Activated CD4-positive, alpha-beta T cell treated with anti-CD3 and anti-CD28 coated beads for 36 hours (primary cell): ENCODE measurements at regions of chr12 and their contacts with region 1.

Region 1: DNA sequence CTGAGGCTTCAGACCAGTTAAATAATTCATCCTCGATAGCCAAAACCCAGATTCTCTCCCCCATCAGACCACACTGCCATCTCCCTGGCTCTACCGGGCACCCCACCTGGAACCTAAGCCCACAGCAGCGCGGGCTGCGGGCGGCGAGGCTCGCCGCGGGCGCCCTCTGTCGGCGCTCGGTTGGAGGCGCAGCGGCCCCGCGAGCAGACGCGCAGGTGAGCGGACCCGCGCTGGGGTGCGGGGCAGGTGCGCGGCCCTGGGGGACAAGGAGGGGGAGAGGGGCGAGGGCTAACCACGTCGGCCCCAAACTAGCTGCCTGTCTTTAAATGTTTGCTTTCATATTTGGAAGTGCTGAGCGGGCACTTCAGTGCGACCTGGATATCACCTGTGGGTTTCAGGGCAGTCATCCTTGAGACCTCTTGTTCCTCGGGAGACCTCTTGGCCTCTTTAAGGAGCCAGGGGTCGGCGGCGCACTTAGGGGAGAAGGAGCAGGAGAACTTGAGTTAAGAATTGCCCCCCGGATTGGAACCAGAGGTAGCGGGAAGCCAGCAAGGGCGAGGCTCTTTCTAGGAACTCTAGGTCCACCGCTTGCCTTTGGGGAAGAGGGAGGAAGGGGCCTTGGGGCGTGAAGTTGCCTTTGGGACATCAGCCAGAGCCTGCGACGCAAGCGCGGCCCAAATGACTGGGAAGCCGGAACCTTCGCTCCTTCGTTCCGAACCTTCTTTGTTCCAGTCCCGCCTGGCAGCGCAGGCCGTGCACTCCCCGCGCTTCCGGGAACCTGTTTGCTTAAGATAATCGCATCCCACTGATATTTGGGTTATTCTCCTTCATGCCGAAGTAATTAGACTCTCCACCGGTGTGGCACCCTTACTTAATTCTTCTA is 78.7 kb downstream of the NEDD1 start:
- DNase-seq: peak; percentile 63
- ATAC-seq: peak; percentile 94
- H3K4me3 Mint-ChIP-seq: peak overlapping the region; percentile 52
- H3K27ac Mint-ChIP-seq: no peak overlapping the region
- H3K4me1 Mint-ChIP-seq: peaks cover 2% of the 10 kb centered on the region
- H3K27me3 Mint-ChIP-seq: peaks cover 16% of the 10 kb centered on the region

Region 2: GRCh38 chr12:96995861-96996260 is 10.1 kb after region 1 on chr12:
- CTCF ChIA-PET with region 1: interaction called, 12 read pairs
- POLR2A ChIA-PET with region 1: no interaction called
- intact Hi-C with region 1: no loop called
- DNase-seq: no peak
- ATAC-seq: no peak
- H3K4me3 Mint-ChIP-seq: no peak overlapping the region
- H3K27ac Mint-ChIP-seq: no peak overlapping the region
- H3K4me1 Mint-ChIP-seq: no peaks in the 10 kb centered on the region
- H3K27me3 Mint-ChIP-seq: peaks cover 13% of the 10 kb centered on the region

Region 3: GRCh38 chr12:97308576-97309198 is 323.0 kb after region 1 on chr12:
- CTCF ChIA-PET with region 1: interaction called, 29 read pairs
- POLR2A ChIA-PET with region 1: no interaction called
- intact Hi-C with region 1: loop called (anchors 1 to 2 kb)
- DNase-seq: no peak
- ATAC-seq: no peak
- H3K4me3 Mint-ChIP-seq: no peak overlapping the region
- H3K27ac Mint-ChIP-seq: no peak overlapping the region
- H3K4me1 Mint-ChIP-seq: no peaks in the 10 kb centered on the region
- H3K27me3 Mint-ChIP-seq: peaks cover 5% of the 10 kb centered on the region

Region 4: DNA sequence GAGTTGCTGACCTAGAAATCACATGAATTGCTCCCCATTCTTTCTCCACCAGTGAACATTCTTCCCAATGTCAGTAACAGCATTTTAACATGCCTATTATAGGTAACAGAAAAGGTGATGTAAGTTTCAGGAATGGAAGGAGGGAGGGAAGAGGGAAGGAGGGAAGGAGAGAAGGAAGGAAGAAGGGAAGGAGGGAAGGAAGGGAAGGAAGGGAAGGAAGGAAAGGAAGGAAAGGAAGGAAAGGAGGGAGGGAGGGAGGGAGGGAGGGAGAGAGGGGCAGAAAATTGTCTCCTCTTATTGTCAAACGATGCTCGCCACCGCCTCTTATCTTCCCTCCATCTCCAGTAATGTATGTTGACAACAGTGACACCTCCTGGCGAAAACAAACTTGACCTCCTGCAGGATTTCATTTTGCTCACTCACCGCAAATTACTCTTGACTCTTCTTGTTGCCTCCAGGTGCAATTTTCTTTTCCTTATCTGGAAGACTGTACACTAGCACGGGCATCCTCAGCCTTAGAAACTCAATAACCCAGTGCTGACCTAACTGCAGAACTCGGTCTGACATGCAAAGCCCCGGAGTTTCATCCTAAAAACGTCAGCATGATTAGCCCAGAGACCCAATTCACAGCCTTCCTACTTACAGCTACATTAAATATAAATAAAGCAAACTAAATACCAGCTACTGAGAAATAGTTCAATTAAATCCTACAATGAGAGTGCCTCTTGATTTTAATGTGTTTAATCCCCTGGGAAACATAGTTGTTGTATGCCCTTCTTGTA is 1017.2 kb after region 1 on chr12:
- CTCF ChIA-PET with region 1: no interaction called
- POLR2A ChIA-PET with region 1: no interaction called
- intact Hi-C with region 1: loop called in 1 of 2 experiments (anchors 2 kb)
- DNase-seq: peak; percentile 58
- ATAC-seq: no peak
- H3K4me3 Mint-ChIP-seq: no peak overlapping the region
- H3K27ac Mint-ChIP-seq: no peak overlapping the region
- H3K4me1 Mint-ChIP-seq: no peaks in the 10 kb centered on the region
- H3K27me3 Mint-ChIP-seq: peaks cover 11% of the 10 kb centered on the region

Region 5: GRCh38 chr12:98397316-98398105 is 1411.8 kb after region 1 on chr12:
- CTCF ChIA-PET with region 1: no interaction called
- POLR2A ChIA-PET with region 1: no interaction called
- intact Hi-C with region 1: loop called in 1 of 2 experiments (anchors 2 kb)
- DNase-seq: peak; percentile 89
- ATAC-seq: peak; percentile 92
- H3K4me3 Mint-ChIP-seq: peak overlapping the region; percentile 65
- H3K27ac Mint-ChIP-seq: peak overlapping the region; percentile 55
- H3K4me1 Mint-ChIP-seq: peaks cover 30% of the 10 kb centered on the region
- H3K27me3 Mint-ChIP-seq: no peaks in the 10 kb centered on the region